ENCODE measurements at regions of chr1 and their contacts with region 1.

Region 1: GRCh38 chr1:99565606-99566289 is 80.2 kb upstream of the PALMD start:
- DNase-seq: peak; percentile 60
- ATAC-seq: peak; percentile 60
- H3K4me3 ChIP-seq: peak overlapping the region in 2 of 3 experiments; percentile 38 to 51; a peak in 3 of 6 replicates
- H3K27ac ChIP-seq: peak overlapping the region; percentile 96
- H3K4me1 ChIP-seq: peaks cover 65% of the 10 kb centered on the region
- H3K27me3 ChIP-seq: no peaks in the 10 kb centered on the region
- CTCF ChIP-seq: no peak
- EP300 ChIP-seq: peak in 1 of 2 experiments; percentile 71; a peak in 2 of 4 replicates
- POLR2A ChIP-seq: no peak
- RAD21 ChIP-seq: no peak

Region 2: GRCh38 chr1:99580451-99580850 is 14.7 kb after region 1 on chr1:
- CTCF ChIA-PET with region 1: no interaction called
- POLR2A ChIA-PET with region 1: interaction called, 11 read pairs
- in situ Hi-C with region 1: no loop called
- intact Hi-C with region 1: no loop called
- DNase-seq: no peak
- ATAC-seq: no peak
- H3K4me3 ChIP-seq: no peak overlapping the region
- H3K27ac ChIP-seq: peak overlapping the region; percentile 46
- H3K4me1 ChIP-seq: peaks cover 51% of the 10 kb centered on the region
- H3K27me3 ChIP-seq: no peaks in the 10 kb centered on the region
- CTCF ChIP-seq: no peak
- EP300 ChIP-seq: no peak
- POLR2A ChIP-seq: no peak
- RAD21 ChIP-seq: no peak

Region 3: DNA sequence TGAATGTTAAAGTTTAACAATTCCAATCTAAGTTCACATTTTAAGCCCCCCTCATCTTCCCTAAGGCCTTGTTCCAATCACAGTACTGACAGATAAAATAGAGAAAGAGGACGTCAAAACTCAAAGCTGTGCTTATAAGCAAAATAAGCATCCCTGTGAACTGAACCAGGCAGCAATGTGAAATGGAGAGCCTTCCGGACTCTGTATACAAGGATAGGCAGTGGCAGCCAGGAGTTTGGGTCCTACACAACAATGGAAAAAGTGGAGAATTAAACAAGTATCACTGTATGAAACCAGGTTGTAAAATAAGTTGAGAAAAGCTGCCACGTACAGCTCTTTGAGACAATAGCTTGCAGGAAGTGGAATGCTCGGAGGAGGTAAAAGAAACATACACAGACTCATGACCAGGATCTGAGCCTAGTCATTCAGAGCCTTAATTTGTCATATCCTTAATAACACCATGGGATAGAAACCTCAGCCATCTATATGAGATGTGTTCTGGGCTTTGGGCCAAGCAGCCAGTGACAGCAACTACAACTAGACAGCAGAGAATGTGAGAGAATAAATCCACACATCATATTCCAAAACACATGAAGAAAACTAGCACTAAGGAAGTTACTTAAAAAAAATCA is 24.9 kb after region 1 on chr1:
- CTCF ChIA-PET with region 1: no interaction called
- POLR2A ChIA-PET with region 1: interaction called, 11 read pairs
- in situ Hi-C with region 1: no loop called
- intact Hi-C with region 1: no loop called
- DNase-seq: no peak
- ATAC-seq: no peak
- H3K4me3 ChIP-seq: no peak overlapping the region
- H3K27ac ChIP-seq: peak overlapping the region; percentile 82
- H3K4me1 ChIP-seq: peaks cover 51% of the 10 kb centered on the region
- H3K27me3 ChIP-seq: no peaks in the 10 kb centered on the region
- CTCF ChIP-seq: no peak
- EP300 ChIP-seq: no peak
- POLR2A ChIP-seq: no peak
- RAD21 ChIP-seq: no peak

Region 4: GRCh38 chr1:99599678-99600175 is 34.0 kb after region 1 on chr1:
- CTCF ChIA-PET with region 1: no interaction called
- POLR2A ChIA-PET with region 1: no interaction called
- in situ Hi-C with region 1: no loop called
- intact Hi-C with region 1: loop called (anchors 5 kb)
- DNase-seq: peak; percentile 86
- ATAC-seq: peak; percentile 80
- H3K4me3 ChIP-seq: no peak overlapping the region
- H3K27ac ChIP-seq: peak overlapping the region; percentile 53
- H3K4me1 ChIP-seq: peaks cover 60% of the 10 kb centered on the region
- H3K27me3 ChIP-seq: no peaks in the 10 kb centered on the region
- CTCF ChIP-seq: no peak
- EP300 ChIP-seq: peak in 1 of 2 experiments; percentile 79; a peak in 1 of 4 replicates
- POLR2A ChIP-seq: no peak
- RAD21 ChIP-seq: no peak

Region 5: GRCh38 chr1:99728494-99729235 is 162.9 kb after region 1 on chr1:
- CTCF ChIA-PET with region 1: no interaction called
- POLR2A ChIA-PET with region 1: no interaction called
- in situ Hi-C with region 1: no loop called
- intact Hi-C with region 1: no loop called
- DNase-seq: peak; percentile 56
- ATAC-seq: peak; percentile 97
- H3K4me3 ChIP-seq: no peak overlapping the region
- H3K27ac ChIP-seq: no peak overlapping the region
- H3K4me1 ChIP-seq: peaks cover 15% of the 10 kb centered on the region
- H3K27me3 ChIP-seq: no peaks in the 10 kb centered on the region
- CTCF ChIP-seq: no peak
- EP300 ChIP-seq: no peak
- POLR2A ChIP-seq: no peak
- RAD21 ChIP-seq: no peak